ENCODE measurements at regions of chr10 and their contacts with region 1.

Region 1: DNA sequence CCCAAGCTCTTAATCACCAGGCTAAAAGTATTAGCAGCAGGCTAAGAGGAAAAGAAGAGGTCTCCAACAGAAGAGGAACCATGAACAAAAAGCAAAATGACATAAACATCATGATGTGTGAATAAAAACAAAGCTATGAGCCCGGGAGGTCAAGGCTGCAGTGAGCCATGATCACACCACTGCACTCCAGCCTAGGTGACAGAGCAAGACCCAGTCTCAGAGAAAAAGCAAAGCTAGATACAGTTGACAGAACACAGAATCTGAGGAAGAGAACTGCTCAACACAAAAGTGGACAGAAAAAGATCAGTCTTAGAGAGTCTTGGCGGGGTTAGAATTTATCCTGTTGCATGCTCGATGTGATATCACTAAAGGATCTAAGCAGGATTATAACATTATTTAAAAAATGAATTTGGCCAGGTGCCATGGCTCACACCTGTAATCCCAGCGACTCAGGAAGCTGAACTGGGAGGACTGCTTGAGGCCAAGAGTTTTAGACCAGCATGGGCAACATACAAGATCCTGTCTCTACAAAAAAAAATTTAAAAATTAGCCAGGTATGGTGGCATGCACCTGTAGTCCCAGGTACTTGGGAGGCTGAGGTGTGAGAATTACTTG is 37.5 kb downstream of the NT5C2 start:
- DNase-seq: no peak
- H3K4me3 ChIP-seq: no peak overlapping the region
- H3K27ac ChIP-seq: peak overlapping the region; percentile 86
- H3K4me1 ChIP-seq: peaks cover 39% of the 10 kb centered on the region
- H3K27me3 ChIP-seq: no peaks in the 10 kb centered on the region
- CTCF ChIP-seq: no peak

Region 2: DNA sequence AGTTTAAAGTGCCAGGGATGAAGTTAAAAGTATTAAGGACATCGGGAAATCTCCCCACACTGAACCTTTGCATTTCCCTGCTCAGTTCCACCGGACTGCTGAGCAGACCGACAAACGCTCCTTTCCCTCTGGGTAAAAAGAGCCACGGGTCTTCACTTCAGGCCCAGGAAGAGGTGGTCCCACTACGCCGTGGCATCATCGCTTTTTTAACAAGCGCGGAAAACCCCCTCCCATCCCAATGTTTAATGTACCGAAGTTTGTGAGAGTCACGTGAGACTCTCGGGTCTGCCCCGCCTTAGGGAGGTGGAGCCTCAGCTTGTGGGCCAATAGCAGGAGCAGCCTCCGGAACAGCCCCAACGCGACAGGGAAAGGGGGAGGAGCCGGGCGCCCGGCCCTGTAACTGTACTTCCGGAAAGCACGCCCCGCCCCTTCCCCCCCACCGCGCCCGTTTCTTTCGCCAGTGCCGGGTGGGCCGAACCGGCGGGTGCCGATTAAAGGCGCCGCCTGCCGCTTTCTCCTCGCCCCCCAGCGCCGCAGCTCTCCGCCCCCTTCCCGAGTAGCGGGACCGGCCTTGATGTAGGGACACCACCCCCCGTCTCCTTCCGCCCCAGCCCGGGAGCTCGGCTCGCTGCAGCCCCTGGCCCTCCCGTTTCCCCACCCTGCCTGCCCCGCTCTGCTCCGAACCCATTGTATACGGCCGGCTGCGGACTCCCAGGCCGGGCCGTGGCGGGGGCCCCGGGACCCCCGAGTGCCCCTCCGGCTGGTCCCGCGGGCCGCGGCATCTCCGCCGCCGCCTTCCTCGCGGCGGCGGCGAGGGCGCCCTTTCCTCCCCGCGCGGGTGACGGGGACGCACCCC is 513.5 kb before region 1 on chr10:
- CTCF ChIA-PET with region 1: no interaction called
- POLR2A ChIA-PET with region 1: no interaction called
- intact Hi-C with region 1: no loop called
- DNase-seq: peak; percentile 98
- H3K4me3 ChIP-seq: peak overlapping the region; percentile 96
- H3K27ac ChIP-seq: peak overlapping the region; percentile 88
- H3K4me1 ChIP-seq: peaks cover 9% of the 10 kb centered on the region
- H3K27me3 ChIP-seq: no peaks in the 10 kb centered on the region
- CTCF ChIP-seq: no peak

Region 3: DNA sequence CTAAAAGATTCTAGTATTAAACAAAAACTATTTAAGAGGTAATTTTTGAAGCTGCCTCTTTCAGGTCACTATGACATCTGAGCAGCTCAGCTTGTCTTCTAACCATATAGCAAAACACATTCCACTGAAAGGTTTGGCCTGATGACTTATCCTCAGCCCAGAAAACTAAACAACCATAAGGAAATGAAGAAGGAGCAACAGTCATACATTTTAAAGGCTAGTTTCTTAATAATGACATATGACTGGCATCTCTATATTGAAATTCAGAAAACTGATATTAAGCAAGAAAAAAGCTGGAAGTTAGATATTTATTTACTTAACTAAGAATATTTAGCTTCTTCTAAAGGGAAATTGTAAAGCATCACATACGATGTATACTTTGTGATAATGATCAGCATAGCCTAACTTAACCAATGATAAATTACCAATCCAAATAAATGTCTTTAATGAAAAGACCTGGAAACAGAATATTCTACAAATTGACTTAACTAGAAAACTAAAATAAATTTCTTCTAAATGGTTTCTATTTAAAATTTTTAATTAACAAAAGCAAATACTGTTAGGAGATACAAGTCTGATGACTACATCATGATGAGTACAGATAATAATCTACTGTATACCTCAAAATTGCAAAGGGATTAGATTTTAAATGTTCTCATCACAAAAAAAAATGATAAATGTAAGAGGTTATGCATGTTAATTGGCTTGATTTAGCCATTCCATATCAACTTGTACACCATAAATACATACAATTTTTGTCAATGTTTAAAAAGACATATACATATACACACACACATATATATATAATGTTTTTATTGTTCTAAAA is 13.1 kb after region 1 on chr10:
- CTCF ChIA-PET with region 1: interaction called, 10 read pairs
- POLR2A ChIA-PET with region 1: no interaction called
- intact Hi-C with region 1: no loop called
- DNase-seq: no peak
- H3K4me3 ChIP-seq: no peak overlapping the region
- H3K27ac ChIP-seq: no peak overlapping the region
- H3K4me1 ChIP-seq: no peaks in the 10 kb centered on the region
- H3K27me3 ChIP-seq: no peaks in the 10 kb centered on the region
- CTCF ChIP-seq: no peak

Measured in A673 (cell line).